Right lobe of liver (tissue), 6 donors: ENCODE measurements at regions of chr1 and their contacts with region 1.

Region 1: GRCh38 chr1:150613061-150613920 is 16.1 kb downstream of the ENSA start:
- DNase-seq: peak in 1 of 3 donors; percentile 61
- ATAC-seq: peak; percentile 49 to 69 (median 58)
- H3K4me3 ChIP-seq: no peak overlapping the region
- H3K27ac ChIP-seq: peak overlapping the region; percentile 81 to 97 (median 89)
- H3K4me1 ChIP-seq: peaks cover 0 to 45% (median 20%) of the 10 kb centered on the region in 4 donors
- H3K27me3 ChIP-seq: no peaks in the 10 kb centered on the region
- CTCF ChIP-seq: no peak
- POLR2A ChIP-seq: peak; percentile 54

Region 2: GRCh38 chr1:150578965-150579798 is 34.1 kb before region 1 on chr1 and contains the start of gene MCL1:
- intact Hi-C with region 1: loop called in 1 of 2 experiments (anchors 5 kb)
- DNase-seq: peak; percentile 95 to 96 (median 95)
- ATAC-seq: peak; percentile 80 to 96 (median 84)
- H3K4me3 ChIP-seq: peak within 1 kb of the TSS; percentile 61 to 99 (median 63)
- H3K27ac ChIP-seq: peak within 1 kb of the TSS; percentile 96 to 99 (median 99)
- H3K4me1 ChIP-seq: peaks cover 0 to 19% (median 7%) of the 10 kb centered on the region in 4 donors
- H3K27me3 ChIP-seq: no peaks in the 10 kb centered on the region
- CTCF ChIP-seq: peak in 1 of 4 donors; percentile 13
- POLR2A ChIP-seq: peak; percentile 98
- total RNA-seq, gene MCL1: 83.6 to 266 (median 158) TPM

Region 3: DNA sequence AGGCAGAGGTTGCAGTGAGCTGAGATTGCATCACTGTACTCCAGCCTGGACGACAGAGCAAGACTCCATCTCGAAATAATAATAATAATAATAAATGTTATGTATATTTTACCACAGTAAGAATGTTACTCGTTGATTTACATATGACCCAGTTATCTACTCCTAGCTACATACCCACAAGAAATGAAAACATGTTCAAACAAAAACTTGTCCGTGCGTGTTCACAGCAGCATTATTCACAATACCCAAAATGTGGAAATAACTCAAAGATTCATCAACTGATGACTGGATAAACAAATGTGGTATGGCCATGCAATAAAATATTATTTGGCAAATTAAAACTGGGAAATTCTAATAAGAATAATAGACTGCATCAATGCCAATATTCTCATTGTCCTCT is 47.9 kb after region 1 on chr1:
- intact Hi-C with region 1: no loop called
- DNase-seq: no peak
- ATAC-seq: no peak
- H3K4me3 ChIP-seq: no peak overlapping the region
- H3K27ac ChIP-seq: no peak overlapping the region
- H3K4me1 ChIP-seq: peaks cover 0 to 13% (median under 1%) of the 10 kb centered on the region in 4 donors
- H3K27me3 ChIP-seq: no peaks in the 10 kb centered on the region
- CTCF ChIP-seq: no peak
- POLR2A ChIP-seq: no peak

Region 4: GRCh38 chr1:150772326-150772725 is 159.0 kb after region 1 on chr1:
- intact Hi-C with region 1: no loop called
- DNase-seq: no peak
- ATAC-seq: no peak
- H3K4me3 ChIP-seq: no peak overlapping the region
- H3K27ac ChIP-seq: no peak overlapping the region
- H3K4me1 ChIP-seq: no peaks in the 10 kb centered on the region
- H3K27me3 ChIP-seq: no peaks in the 10 kb centered on the region
- CTCF ChIP-seq: no peak
- POLR2A ChIP-seq: no peak

Region 5: DNA sequence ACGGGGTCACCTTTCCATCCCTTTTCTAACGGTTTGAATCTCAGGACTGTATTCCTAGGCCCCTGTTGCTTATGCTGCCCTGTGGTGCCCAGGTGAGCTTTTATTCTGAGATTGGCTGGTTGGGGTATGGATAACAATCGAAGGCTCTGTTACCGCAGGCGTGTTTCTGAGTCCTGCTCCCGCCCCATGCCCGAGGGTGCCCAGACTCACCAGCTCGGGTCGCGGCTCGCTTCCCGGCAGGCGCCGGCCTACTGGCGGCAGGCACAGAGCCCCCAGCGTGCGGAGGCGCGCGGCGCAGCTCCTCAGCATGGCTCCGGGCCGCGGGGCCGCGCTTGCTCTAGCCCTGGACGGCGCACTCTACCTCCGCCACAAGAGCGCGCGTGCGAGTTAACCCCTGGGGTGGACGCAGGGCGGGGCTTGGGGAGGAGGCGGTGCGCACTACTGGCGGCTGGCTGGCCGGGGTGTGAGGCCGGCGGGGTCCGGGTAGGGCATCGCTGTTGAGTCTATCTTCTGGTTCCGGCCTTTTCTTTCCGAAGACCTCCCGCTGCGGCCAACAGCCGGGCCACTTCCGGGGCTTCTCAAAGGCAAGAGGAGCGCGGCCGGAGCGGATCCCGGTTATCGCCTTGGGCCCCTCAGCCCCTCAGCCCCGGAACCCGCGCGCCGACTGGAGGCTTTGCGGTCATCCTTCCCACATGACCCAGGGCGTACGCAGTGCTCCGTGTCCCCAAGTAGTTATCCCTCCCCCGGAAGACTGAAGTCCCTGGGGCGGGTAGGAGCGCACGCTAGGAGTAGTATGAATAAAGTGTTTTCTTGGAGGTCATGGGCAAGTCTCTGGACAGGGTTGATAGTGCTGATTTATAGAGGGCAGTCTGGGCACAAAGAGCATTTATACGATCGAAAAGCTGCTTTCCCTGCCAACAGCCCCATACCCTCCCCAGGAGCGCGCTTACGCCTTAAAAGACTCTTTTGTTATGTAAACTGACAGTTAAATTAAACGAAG is 1296.2 kb after region 1 on chr1 and contains the start of gene THEM4:
- intact Hi-C with region 1: no loop called
- DNase-seq: peak; percentile 98 to 99 (median 99)
- ATAC-seq: peak; percentile 98 to 99 (median 98)
- H3K4me3 ChIP-seq: peak within 1 kb of the TSS; percentile 58 to 71 (median 68)
- H3K27ac ChIP-seq: peak within 1 kb of the TSS; percentile 77 to 82 (median 77)
- H3K4me1 ChIP-seq: peaks cover 0 to 6% (median 0%) of the 10 kb centered on the region in 4 donors
- H3K27me3 ChIP-seq: no peaks in the 10 kb centered on the region
- CTCF ChIP-seq: peak; percentile 24 to 49 (median 40)
- POLR2A ChIP-seq: peak; percentile 98
- total RNA-seq, gene THEM4: 8.5 to 19.1 (median 9.2) TPM